Activated CD8-positive, alpha-beta T cell treated with anti-CD3 and anti-CD28 coated beads, Interleukin-2, amount 10 ng/mL, durations not matched to agents 7 days and 5 days (primary cell): ENCODE measurements at regions of chr1 and their contacts with region 1.

Region 1: GRCh38 chr1:45011837-45012638 is at the start of gene UROD:
- DNase-seq: peak; percentile 96
- ATAC-seq: peak; percentile 80
- H3K4me3 Mint-ChIP-seq: peak within 1 kb of the TSS; percentile 75
- H3K27ac Mint-ChIP-seq: peak within 1 kb of the TSS; percentile 81
- H3K4me1 Mint-ChIP-seq: peaks cover 42% of the 10 kb centered on the region
- H3K27me3 Mint-ChIP-seq: no peaks in the 10 kb centered on the region
- total RNA-seq, gene UROD: 74.7 to 76.4 TPM

Region 2: GRCh38 chr1:44775078-44775929 is 236.7 kb before region 1 on chr1 and contains the start of gene RPS8:
- CTCF ChIA-PET with region 1: interaction called, 3 read pairs
- POLR2A ChIA-PET with region 1: interaction called, 16 read pairs
- DNase-seq: peak; percentile 95
- ATAC-seq: peak; percentile 80
- H3K4me3 Mint-ChIP-seq: peak within 1 kb of the TSS; percentile 86
- H3K27ac Mint-ChIP-seq: peak within 1 kb of the TSS; percentile 97
- H3K4me1 Mint-ChIP-seq: peaks cover 33% of the 10 kb centered on the region
- H3K27me3 Mint-ChIP-seq: no peaks in the 10 kb centered on the region
- total RNA-seq, gene RPS8: 1,750 to 1,777 TPM

Region 3: GRCh38 chr1:44799770-44800584 is 212.1 kb before region 1 on chr1 and contains the start of gene PLK3:
- CTCF ChIA-PET with region 1: interaction called, 34 read pairs
- POLR2A ChIA-PET with region 1: interaction called, 11 read pairs
- DNase-seq: peak; percentile 99
- ATAC-seq: peak; percentile 77
- H3K4me3 Mint-ChIP-seq: peak within 1 kb of the TSS; percentile 96
- H3K27ac Mint-ChIP-seq: peak within 1 kb of the TSS; percentile 100
- H3K4me1 Mint-ChIP-seq: peaks cover 42% of the 10 kb centered on the region
- H3K27me3 Mint-ChIP-seq: no peaks in the 10 kb centered on the region
- total RNA-seq, gene PLK3: 64.8 to 68.0 TPM

Region 4: DNA sequence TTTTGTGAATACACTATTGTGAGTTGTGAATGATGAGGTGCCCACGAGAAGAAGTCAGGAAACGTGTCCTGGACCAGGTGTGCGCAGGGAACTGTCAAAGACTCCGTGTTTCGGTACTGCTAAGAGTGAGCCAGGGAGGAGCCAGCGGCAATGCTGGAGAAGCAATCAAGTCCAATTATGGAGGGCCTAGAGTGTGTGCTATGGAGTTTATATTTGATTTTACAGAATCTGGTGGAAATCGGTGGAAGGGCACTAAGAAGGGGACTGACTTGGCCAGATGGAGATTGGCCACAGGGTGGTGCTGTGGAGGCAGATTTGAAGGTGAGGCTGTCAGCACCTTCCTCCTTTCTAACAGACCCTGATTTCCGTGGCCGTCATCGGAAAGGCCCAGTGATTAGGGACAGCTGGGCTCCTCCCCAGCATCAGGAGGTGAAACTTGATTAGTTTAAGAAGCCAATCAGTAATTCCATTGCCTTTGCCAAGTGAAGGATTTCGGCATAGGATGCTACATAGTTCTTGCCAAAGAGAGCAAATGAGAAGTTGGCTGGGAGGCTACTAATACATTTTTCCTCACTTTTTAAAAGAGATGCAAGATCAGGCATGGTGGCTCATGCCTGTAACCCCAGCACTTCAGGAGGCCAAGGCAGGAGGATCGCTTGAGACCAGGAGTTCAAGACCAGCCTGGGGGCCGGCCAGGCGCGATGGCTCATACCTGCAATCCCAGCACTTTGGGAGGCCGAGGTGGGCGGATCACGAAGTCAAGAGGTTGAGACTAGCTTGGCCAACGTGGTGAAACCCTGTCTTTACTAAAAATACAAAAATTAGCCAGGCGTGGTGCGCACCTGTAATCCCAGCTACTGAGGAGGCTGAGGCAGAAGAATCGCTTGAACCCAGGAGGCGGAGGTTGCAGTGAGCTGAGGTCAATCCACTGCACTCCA is 176.0 kb before region 1 on chr1:
- CTCF ChIA-PET with region 1: interaction called, 24 read pairs
- POLR2A ChIA-PET with region 1: interaction called, 4 read pairs
- DNase-seq: peak; percentile 93
- ATAC-seq: peak; percentile 95
- H3K4me3 Mint-ChIP-seq: no peak overlapping the region
- H3K27ac Mint-ChIP-seq: peak overlapping the region; percentile 7
- H3K4me1 Mint-ChIP-seq: peaks cover 8% of the 10 kb centered on the region
- H3K27me3 Mint-ChIP-seq: peaks cover under 1% of the 10 kb centered on the region

Region 5: DNA sequence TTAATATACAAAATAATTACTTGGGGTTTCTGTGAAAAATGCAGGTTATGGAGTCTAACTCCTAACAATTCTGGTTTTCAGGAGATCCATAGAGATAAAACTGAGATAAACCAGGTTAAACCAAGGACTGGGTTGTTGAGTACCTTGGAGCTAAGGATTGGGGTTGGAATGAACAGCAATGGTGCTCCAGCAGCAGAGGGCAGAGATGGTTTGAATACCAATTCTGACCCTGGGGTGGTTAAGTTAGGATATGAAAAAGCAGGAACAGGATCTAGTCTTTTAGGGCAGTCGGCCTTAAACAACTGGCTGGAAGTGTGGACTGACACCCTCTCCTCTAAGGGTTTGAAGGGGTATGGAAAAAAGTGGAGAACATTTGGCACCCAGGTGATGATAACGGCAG is 53.0 kb after region 1 on chr1:
- CTCF ChIA-PET with region 1: no interaction called
- POLR2A ChIA-PET with region 1: no interaction called
- DNase-seq: no peak
- ATAC-seq: no peak
- H3K4me3 Mint-ChIP-seq: no peak overlapping the region
- H3K27ac Mint-ChIP-seq: no peak overlapping the region
- H3K4me1 Mint-ChIP-seq: peaks cover 3% of the 10 kb centered on the region
- H3K27me3 Mint-ChIP-seq: no peaks in the 10 kb centered on the region

Region 6: DNA sequence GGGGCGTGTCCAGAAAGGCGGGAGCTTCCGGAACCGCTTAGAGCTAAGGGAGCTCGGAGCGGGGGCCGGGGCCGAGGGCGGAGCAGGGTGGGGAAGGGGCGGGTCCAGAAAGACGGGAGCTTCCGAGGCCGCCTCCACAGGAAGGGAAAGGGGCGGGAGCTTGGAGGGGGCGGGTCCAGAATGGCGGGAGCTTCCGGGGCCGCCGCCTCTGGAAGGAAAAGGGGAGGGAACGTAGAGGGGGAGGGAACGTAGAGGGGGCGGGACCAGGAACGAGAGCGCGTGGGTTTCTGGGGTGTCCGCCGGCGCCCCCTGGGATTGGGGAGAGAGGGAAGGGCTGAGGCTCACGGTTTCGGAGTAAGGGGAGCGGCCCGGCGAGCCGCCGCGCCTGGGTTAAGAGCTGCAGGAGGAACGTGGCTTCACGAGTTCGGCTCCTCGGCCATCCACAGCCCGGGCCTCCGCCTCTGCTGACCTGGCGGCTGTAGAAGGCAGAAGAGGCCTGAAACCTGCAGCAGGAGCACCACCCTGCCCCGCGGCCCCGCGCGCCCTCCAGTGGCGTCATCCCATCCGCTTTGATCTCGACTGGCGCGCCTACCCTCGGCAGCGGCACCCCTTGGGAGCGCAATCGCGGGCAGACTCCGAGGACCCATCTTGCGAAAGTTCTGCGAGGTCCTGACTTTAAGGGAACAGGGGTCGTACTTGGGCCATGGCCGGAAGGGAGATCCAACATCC is 291.7 kb after region 1 on chr1:
- CTCF ChIA-PET with region 1: interaction called, 361 read pairs
- POLR2A ChIA-PET with region 1: interaction called, 78 read pairs
- DNase-seq: peak; percentile 99
- ATAC-seq: peak; percentile 89
- H3K4me3 Mint-ChIP-seq: peak overlapping the region; percentile 89
- H3K27ac Mint-ChIP-seq: peak overlapping the region; percentile 97
- H3K4me1 Mint-ChIP-seq: peaks cover 40% of the 10 kb centered on the region
- H3K27me3 Mint-ChIP-seq: no peaks in the 10 kb centered on the region

Region 7: GRCh38 chr1:45583264-45583665 is 571.2 kb after region 1 on chr1:
- CTCF ChIA-PET with region 1: no interaction called
- POLR2A ChIA-PET with region 1: interaction called, 12 read pairs
- DNase-seq: peak; percentile 97
- ATAC-seq: peak; percentile 75
- H3K4me3 Mint-ChIP-seq: peak overlapping the region; percentile 99
- H3K27ac Mint-ChIP-seq: peak overlapping the region; percentile 100
- H3K4me1 Mint-ChIP-seq: peaks cover 26% of the 10 kb centered on the region
- H3K27me3 Mint-ChIP-seq: no peaks in the 10 kb centered on the region